Body of pancreas (tissue), 4 donors: ENCODE measurements at regions of chr22 and their contacts with region 1.

Region 1: DNA sequence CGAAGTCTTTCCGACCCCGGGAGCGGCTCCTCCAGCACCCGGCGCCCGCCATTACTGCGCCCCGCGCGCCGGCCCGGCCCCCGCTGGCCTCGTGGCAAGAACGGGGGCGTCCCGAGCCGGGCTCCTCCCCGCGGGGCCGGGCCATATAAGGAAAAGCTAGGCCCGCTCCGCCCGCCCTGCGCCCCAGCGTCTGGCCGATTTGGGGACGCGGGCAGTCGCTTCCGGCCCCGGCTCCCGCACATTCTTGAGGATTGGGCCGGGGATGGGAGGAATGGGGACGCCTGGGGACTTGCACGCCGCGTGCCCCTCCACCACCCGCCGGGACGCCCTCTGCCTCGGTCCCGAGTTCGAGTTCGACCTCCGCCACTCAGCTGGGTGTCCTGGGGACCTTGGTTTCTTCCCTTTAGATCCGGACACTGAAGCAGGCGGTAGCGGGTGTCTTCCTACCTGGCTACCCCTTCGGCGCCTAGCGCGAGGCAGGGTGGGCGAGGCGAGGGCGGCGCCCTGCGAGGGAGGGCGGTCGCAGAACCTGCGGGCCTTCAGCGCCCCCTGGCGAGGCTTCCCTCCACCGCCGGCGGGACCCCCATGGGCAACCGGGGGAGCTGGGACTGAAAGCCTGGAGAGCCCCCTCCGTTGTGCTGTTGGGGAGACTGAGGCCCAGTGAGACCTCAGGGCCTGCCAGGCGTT is 3.8 kb downstream of the SMTN start:
- DNase-seq: peak; percentile 78 to 88 (median 84)
- ATAC-seq: peak; percentile 47
- H3K4me3 ChIP-seq: peak overlapping the region; percentile 4 to 19
- H3K27ac ChIP-seq: peak overlapping the region; percentile 60 to 97 (median 92)
- H3K4me1 ChIP-seq: peaks cover 61% of the 10 kb centered on the region
- H3K27me3 ChIP-seq: no peaks in the 10 kb centered on the region
- CTCF ChIP-seq: peak; percentile 50 to 75 (median 68)
- POLR2A ChIP-seq: peak; percentile 53 to 82 (median 74)

Region 2: GRCh38 chr22:30947816-30948454 is 137.0 kb before region 1 on chr22:
- intact Hi-C with region 1: loop called (anchors 5 kb)
- DNase-seq: no peak
- ATAC-seq: peak; percentile 66
- H3K4me3 ChIP-seq: no peak overlapping the region
- H3K27ac ChIP-seq: no peak overlapping the region
- H3K4me1 ChIP-seq: no peaks in the 10 kb centered on the region
- H3K27me3 ChIP-seq: no peaks in the 10 kb centered on the region
- CTCF ChIP-seq: peak; percentile 5 to 71 (median 62)
- POLR2A ChIP-seq: no peak

Region 3: DNA sequence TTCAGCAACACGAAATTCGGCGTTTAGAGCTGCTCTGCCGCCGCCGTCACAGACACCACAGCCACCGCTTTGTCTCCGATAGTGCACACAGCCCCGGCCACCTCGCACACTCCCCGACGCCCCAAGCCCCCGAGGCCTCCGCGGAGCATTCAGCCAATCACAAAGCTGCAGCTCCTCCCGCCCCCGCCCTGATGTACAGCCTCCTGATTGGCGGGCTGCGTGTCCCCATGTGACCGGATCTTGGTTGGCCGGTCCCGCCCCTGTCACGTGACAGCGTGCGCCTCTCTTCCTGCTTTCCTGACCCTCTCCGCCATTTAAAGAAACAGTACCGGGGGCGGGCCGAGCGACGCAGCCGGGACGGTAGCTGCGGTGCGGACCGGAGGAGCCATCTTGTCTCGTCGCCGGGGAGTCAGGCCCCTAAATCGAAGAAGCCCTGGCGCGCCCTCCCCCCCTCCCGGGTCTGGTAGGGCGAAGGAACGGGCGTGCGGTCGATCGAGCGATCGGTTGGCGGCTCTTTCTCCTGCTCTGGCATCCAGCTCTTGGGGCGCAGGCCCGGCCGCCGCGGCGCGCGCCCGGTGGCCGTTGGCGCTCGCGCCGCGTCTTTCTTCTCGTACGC is 115.9 kb before region 1 on chr22 and contains the start of gene TUG1:
- intact Hi-C with region 1: no loop called
- DNase-seq: peak; percentile 98 to 99 (median 98)
- ATAC-seq: peak; percentile 94
- H3K4me3 ChIP-seq: peak within 1 kb of the TSS; percentile 67 to 78
- H3K27ac ChIP-seq: peak within 1 kb of the TSS; percentile 86 to 96 (median 88)
- H3K4me1 ChIP-seq: peaks cover 54% of the 10 kb centered on the region
- H3K27me3 ChIP-seq: no peaks in the 10 kb centered on the region
- CTCF ChIP-seq: peak in 1 of 7 experiments; percentile 17
- POLR2A ChIP-seq: peak; percentile 66 to 74 (median 72)
- total RNA-seq, gene TUG1: 48.0 to 48.5 TPM

Region 4: GRCh38 chr22:31160328-31160978 is 75.5 kb after region 1 on chr22:
- intact Hi-C with region 1: no loop called
- DNase-seq: peak in 3 of 4 donors; percentile 19 to 36 (median 27)
- ATAC-seq: peak; percentile 41
- H3K4me3 ChIP-seq: peak overlapping the region; percentile 50 to 64
- H3K27ac ChIP-seq: peak overlapping the region; percentile 72 to 85 (median 78)
- H3K4me1 ChIP-seq: peaks cover 30% of the 10 kb centered on the region
- H3K27me3 ChIP-seq: no peaks in the 10 kb centered on the region
- CTCF ChIP-seq: no peak
- POLR2A ChIP-seq: no peak